CD4-positive, alpha-beta T cell (primary cell): ENCODE measurements at regions of chr20 and their contacts with region 1.

Region 1: DNA sequence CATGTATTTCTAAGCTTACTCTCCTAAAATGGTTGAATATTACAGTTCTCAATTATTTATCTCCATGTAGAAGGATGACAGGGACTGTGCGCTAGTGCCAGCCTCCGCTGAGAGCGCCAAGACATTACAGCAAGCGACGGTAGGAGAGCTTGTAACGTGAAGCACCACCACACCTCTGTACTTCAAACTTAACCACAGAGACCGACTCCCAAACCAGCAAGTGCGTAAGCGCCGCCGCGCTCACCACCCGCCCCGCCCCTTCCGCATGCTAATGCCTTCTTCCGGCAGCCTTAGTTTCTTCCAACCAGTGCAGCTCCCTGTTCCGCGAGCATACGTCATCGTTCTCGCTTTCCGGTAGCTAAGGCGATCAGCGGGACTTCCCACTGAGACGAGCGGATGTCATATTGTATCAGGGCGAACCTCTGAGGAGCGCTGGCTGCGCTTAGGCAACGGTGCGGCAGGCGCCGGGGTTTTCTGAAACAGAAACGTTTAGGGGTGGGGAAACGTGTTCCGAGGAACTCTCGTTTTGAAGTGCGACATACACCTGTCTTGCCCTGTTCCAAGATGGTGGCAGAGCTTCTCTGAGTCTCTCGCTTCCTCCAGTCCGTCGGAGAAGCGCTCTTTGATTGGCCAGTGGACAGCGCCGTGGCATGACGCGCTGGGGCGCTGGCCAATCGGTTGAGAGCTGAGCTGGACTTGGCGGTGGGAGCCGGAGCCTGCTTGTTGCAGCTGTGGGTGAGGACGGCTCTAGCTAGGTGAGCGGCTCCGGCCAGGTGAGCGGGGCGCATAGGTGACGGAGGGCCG is at the start of gene SEC23B:
- DNase-seq: peak; percentile 94 to 99 (median 98)
- ATAC-seq: peak; percentile 81
- H3K4me3 ChIP-seq: peak within 1 kb of the TSS; percentile 86
- H3K4me3 Mint-ChIP-seq: peak within 1 kb of the TSS; percentile 98
- H3K27ac ChIP-seq: peak within 1 kb of the TSS; percentile 94 to 99
- H3K27ac Mint-ChIP-seq: peak within 1 kb of the TSS; percentile 100
- H3K4me1 ChIP-seq: peaks cover 26% of the 10 kb centered on the region
- H3K4me1 Mint-ChIP-seq: peaks cover 52% of the 10 kb centered on the region
- H3K27me3 ChIP-seq: peaks cover 0 to 2% of the 10 kb centered on the region in 2 experiments
- H3K27me3 Mint-ChIP-seq: no peaks in the 10 kb centered on the region
- CTCF ChIP-seq: no peak
- total RNA-seq, gene SEC23B: 29.2 to 32.8 TPM

Region 2: GRCh38 chr20:18137412-18138265 is 369.8 kb before region 1 on chr20 and contains the starts of genes KAT14 and PET117:
- CTCF ChIA-PET with region 1: no interaction called
- POLR2A ChIA-PET with region 1: interaction called, 19 read pairs
- intact Hi-C with region 1: loop called in 1 of 2 experiments (anchors 5 kb)
- DNase-seq: peak; percentile 83 to 96 (median 91)
- ATAC-seq: peak; percentile 92
- H3K4me3 ChIP-seq: peak within 1 kb of the TSS; percentile 81
- H3K4me3 Mint-ChIP-seq: peak within 1 kb of the TSS; percentile 96
- H3K27ac ChIP-seq: peak within 1 kb of the TSS; percentile 72 to 75
- H3K27ac Mint-ChIP-seq: peak within 1 kb of the TSS; percentile 95
- H3K4me1 ChIP-seq: peaks cover 32% of the 10 kb centered on the region
- H3K4me1 Mint-ChIP-seq: peaks cover 32% of the 10 kb centered on the region
- H3K27me3 ChIP-seq: no peaks in the 10 kb centered on the region
- H3K27me3 Mint-ChIP-seq: no peaks in the 10 kb centered on the region
- CTCF ChIP-seq: no peak
- total RNA-seq, gene KAT14: 8.5 to 9.4 TPM
- total RNA-seq, gene PET117: 13.6 to 14.6 TPM

Region 3: DNA sequence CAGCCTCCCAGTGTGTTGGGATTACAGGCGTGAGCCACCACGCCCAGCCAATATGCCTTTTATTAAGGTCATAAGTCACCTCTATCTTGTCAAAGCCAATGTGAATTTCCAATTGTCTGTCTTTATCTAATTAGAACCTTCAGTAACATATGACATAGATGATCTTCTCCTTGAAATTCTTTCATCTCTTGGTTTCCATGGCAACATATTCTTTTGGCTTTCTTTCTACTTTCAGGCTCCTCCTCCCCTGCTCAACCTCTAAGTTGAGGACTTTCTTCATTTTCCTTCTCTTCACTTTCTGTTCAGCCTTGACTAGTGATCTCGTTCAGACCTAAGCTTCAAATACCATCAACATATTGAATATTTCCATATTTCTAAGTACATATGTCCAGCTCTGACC is 56.2 kb before region 1 on chr20:
- CTCF ChIA-PET with region 1: no interaction called
- POLR2A ChIA-PET with region 1: no interaction called
- intact Hi-C with region 1: no loop called
- DNase-seq: no peak
- ATAC-seq: no peak
- H3K4me3 ChIP-seq: no peak overlapping the region
- H3K4me3 Mint-ChIP-seq: no peak overlapping the region
- H3K27ac ChIP-seq: no peak overlapping the region
- H3K27ac Mint-ChIP-seq: no peak overlapping the region
- H3K4me1 ChIP-seq: no peaks in the 10 kb centered on the region
- H3K4me1 Mint-ChIP-seq: no peaks in the 10 kb centered on the region
- H3K27me3 ChIP-seq: no peaks in the 10 kb centered on the region
- H3K27me3 Mint-ChIP-seq: no peaks in the 10 kb centered on the region
- CTCF ChIP-seq: no peak

Region 4: DNA sequence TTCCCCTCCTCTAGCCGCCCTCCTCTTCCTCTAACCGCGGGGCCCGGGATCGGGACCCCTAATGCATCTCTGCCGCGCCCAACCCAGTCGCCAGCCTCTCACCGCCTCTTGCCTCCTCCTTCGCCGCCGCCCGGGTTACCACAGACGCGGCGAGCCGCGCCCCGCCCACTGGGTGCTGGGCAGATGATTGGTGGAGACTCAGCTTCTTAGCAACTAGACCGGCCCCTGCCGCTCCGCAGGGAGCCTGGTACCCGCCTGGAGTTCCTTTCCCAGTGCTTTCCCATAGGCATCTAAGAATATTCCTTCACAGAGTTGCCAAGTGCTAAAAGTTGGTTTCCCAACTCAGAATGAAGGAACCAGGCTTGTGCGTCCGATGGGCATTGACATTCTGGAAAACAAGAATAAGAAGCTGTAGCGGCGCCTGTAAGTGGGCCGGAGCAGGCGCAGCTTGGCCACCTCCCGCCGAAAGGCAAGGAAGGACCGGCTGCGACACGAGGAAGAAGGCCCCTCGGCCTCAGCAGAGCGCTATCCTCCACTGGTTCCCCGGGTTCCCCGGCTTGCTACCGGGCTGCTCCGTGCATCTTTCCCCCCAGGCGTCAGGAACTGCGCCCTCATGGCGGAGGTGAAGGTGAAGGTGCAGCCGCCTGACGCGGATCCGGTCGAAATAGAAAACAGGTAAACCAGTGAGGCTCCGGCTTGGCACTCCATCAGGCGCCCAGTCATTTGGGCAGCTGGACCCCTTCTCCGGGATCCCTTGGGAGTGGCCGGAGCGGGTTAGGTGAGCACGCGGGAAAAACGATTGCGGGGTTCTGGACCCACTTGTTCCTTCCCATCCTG is 40.3 kb before region 1 on chr20 and contains the starts of genes DZANK1 and POLR3F:
- CTCF ChIA-PET with region 1: interaction called, 9 read pairs
- POLR2A ChIA-PET with region 1: interaction called, 130 read pairs
- intact Hi-C with region 1: loop called (anchors 1 kb)
- DNase-seq: peak; percentile 84 to 96 (median 90)
- ATAC-seq: peak; percentile 89
- H3K4me3 ChIP-seq: peak within 1 kb of the TSS; percentile 95
- H3K4me3 Mint-ChIP-seq: peak within 1 kb of the TSS; percentile 96
- H3K27ac ChIP-seq: peak within 1 kb of the TSS; percentile 77 to 91
- H3K27ac Mint-ChIP-seq: peak within 1 kb of the TSS; percentile 96
- H3K4me1 ChIP-seq: peaks cover 17% of the 10 kb centered on the region
- H3K4me1 Mint-ChIP-seq: peaks cover 39% of the 10 kb centered on the region
- H3K27me3 ChIP-seq: no peaks in the 10 kb centered on the region
- H3K27me3 Mint-ChIP-seq: no peaks in the 10 kb centered on the region
- CTCF ChIP-seq: no peak
- total RNA-seq, gene DZANK1: 1.8 to 1.9 TPM
- total RNA-seq, gene POLR3F: 7.9 to 8.8 TPM

Region 5: DNA sequence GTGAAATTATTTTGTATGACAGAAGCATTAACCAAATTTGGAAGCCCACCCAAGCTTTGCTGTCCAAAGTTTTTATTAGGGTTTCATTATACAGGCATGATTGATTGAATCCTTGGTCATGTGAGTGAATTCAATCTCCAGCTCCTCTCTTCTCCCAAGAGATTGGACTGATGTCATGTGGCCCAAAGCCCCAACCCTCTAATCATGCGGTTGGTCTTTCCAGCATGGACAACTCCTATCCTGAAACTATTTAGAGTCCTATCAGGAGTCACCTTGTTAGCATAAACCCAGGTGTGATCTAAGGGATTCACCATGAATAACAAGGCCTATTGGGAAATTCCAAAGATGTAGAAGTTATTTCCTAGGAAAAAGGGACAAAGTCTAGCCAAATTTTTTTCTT is 29.6 kb before region 1 on chr20:
- CTCF ChIA-PET with region 1: no interaction called
- POLR2A ChIA-PET with region 1: interaction called, 21 read pairs
- intact Hi-C with region 1: no loop called
- DNase-seq: no peak
- ATAC-seq: no peak
- H3K4me3 ChIP-seq: no peak overlapping the region
- H3K4me3 Mint-ChIP-seq: no peak overlapping the region
- H3K27ac ChIP-seq: no peak overlapping the region
- H3K27ac Mint-ChIP-seq: no peak overlapping the region
- H3K4me1 ChIP-seq: no peaks in the 10 kb centered on the region
- H3K4me1 Mint-ChIP-seq: no peaks in the 10 kb centered on the region
- H3K27me3 ChIP-seq: no peaks in the 10 kb centered on the region
- H3K27me3 Mint-ChIP-seq: no peaks in the 10 kb centered on the region
- CTCF ChIP-seq: no peak

Region 6: GRCh38 chr20:18496740-18497592 is 10.5 kb before region 1 on chr20 and contains the start of gene RBBP9:
- CTCF ChIA-PET with region 1: interaction called, 25 read pairs
- POLR2A ChIA-PET with region 1: interaction called, 134 read pairs
- intact Hi-C with region 1: no loop called
- DNase-seq: peak; percentile 48 to 87 (median 70)
- ATAC-seq: peak; percentile 93
- H3K4me3 ChIP-seq: peak within 1 kb of the TSS; percentile 72
- H3K4me3 Mint-ChIP-seq: peak within 1 kb of the TSS; percentile 94
- H3K27ac ChIP-seq: peak within 1 kb of the TSS; percentile 38 to 44
- H3K27ac Mint-ChIP-seq: peak within 1 kb of the TSS; percentile 80
- H3K4me1 ChIP-seq: peaks cover 10% of the 10 kb centered on the region
- H3K4me1 Mint-ChIP-seq: peaks cover 20% of the 10 kb centered on the region
- H3K27me3 ChIP-seq: no peaks in the 10 kb centered on the region
- H3K27me3 Mint-ChIP-seq: no peaks in the 10 kb centered on the region
- CTCF ChIP-seq: no peak
- total RNA-seq, gene RBBP9: 1.6 to 2.1 TPM

Region 7: GRCh38 chr20:18566892-18567742 is 59.7 kb after region 1 on chr20 and contains the start of gene SMIM26:
- CTCF ChIA-PET with region 1: interaction called, 8 read pairs
- POLR2A ChIA-PET with region 1: interaction called, 64 read pairs
- intact Hi-C with region 1: loop called (anchors 1 kb)
- DNase-seq: peak; percentile 90 to 97 (median 94)
- ATAC-seq: peak; percentile 99
- H3K4me3 ChIP-seq: peak within 1 kb of the TSS; percentile 91
- H3K4me3 Mint-ChIP-seq: peak within 1 kb of the TSS; percentile 99
- H3K27ac ChIP-seq: peak within 1 kb of the TSS; percentile 82 to 94
- H3K27ac Mint-ChIP-seq: peak within 1 kb of the TSS; percentile 100
- H3K4me1 ChIP-seq: peaks cover 20% of the 10 kb centered on the region
- H3K4me1 Mint-ChIP-seq: peaks cover 28% of the 10 kb centered on the region
- H3K27me3 ChIP-seq: no peaks in the 10 kb centered on the region
- H3K27me3 Mint-ChIP-seq: no peaks in the 10 kb centered on the region
- CTCF ChIP-seq: no peak
- total RNA-seq, gene SMIM26: 78.7 to 79.8 TPM

Region 8: DNA sequence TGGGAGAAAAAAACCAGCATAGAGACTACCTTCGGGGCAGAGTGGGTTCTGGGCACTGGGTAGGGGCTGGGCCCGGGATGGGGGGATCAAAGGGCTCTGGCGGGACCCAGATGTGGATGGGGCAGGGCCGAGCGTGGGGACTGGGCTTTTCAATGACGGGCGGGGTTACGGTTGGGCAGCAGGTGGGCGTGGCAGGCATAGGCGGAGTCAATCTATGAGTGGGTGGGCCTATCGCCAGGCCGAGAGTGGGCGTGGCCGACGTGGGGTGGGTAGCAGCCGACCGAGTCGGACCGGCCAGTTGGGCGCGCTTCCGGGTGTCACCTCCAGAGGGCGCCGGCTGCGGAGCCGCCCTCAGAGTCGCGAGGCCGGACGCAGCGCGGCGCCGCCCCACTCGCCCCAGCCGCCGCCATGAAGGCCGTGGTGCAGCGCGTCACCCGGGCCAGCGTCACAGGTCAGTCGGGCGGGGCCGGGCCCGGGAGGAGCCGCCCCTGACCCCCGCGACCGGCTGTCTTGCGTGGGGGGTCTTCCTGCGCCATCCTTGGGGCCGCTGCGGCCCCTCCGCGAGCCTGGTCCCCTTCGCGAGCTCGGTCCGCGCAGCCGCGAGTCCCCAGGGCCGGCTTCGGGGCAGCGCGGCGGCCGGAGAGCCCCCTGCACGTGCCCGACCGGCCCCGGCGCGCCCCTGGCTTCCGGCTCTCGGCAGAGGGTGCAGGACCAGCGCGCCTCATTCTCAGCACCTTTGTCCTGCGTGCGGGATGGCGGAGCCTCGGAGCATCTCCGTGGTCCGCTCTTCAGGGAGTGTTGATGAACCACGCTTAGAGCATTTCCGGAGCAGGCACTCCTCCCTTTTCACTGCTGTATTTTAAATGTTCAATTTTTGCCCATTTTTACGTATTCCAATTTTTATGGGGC is 80.5 kb after region 1 on chr20 and contains the start of gene DTD1:
- CTCF ChIA-PET with region 1: no interaction called
- POLR2A ChIA-PET with region 1: interaction called, 22 read pairs
- intact Hi-C with region 1: loop called in 1 of 2 experiments (anchors 5 kb)
- DNase-seq: peak; percentile 56 to 89 (median 74)
- ATAC-seq: peak; percentile 75
- H3K4me3 ChIP-seq: peak within 1 kb of the TSS; percentile 63
- H3K4me3 Mint-ChIP-seq: peak within 1 kb of the TSS; percentile 89
- H3K27ac ChIP-seq: peak within 1 kb of the TSS; percentile 38 to 56
- H3K27ac Mint-ChIP-seq: peak within 1 kb of the TSS; percentile 90
- H3K4me1 ChIP-seq: peaks cover 17% of the 10 kb centered on the region
- H3K4me1 Mint-ChIP-seq: peaks cover 23% of the 10 kb centered on the region
- H3K27me3 ChIP-seq: no peaks in the 10 kb centered on the region
- H3K27me3 Mint-ChIP-seq: peaks cover 8% of the 10 kb centered on the region
- CTCF ChIP-seq: peak; percentile 44
- total RNA-seq, gene DTD1: 15.4 to 16.1 TPM